ENCODE measurements at regions of chr19 and their contacts with region 1.

Region 1: GRCh38 chr19:15323496-15324227 is 8.7 kb downstream of the BRD4 start:
- DNase-seq: peak; percentile 53 to 77 (median 64)
- ATAC-seq: peak; percentile 52 to 72 (median 64)
- H3K4me3 ChIP-seq: no peak overlapping the region
- H3K27ac ChIP-seq: peak overlapping the region; percentile 21 to 82 (median 58)
- H3K4me1 ChIP-seq: peaks cover 65 to 91% (median 77%) of the 10 kb centered on the region in 3 donors
- H3K27me3 ChIP-seq: no peaks in the 10 kb centered on the region
- CTCF ChIP-seq: no peak

Region 2: DNA sequence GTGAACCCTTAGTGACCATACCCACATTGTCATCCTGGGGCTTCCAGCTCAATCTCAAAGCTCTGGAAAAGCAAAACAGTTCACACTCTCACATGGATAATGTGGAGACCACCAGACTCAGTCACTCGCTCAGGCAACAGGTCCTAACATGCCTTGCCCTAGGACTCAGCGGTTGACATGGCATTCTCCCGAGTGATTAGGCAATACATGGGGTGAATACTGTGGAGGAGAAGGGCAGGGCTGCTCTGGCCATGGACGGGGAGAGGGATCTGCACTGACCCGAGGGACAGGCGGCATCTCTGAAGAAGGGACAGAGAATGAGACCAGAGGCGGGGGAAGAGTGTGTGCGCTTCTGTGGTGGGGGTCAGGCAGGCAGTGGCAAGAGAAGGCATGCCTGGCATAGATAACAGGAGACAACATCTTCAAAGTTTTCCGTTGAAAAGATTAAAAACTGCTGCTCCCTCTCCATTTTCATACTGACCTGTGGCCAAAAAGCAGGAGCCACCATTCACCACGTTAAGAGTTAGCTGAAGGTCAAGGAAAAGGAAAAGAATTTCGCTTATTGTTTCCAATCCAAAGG is 46.9 kb before region 1 on chr19:
- intact Hi-C with region 1: loop called in 1 of 3 experiments (anchors 10 kb)
- DNase-seq: no peak
- ATAC-seq: no peak
- H3K4me3 ChIP-seq: no peak overlapping the region
- H3K27ac ChIP-seq: no peak overlapping the region
- H3K4me1 ChIP-seq: peaks cover 18 to 50% (median 39%) of the 10 kb centered on the region in 3 donors
- H3K27me3 ChIP-seq: no peaks in the 10 kb centered on the region
- CTCF ChIP-seq: no peak

Measured in pancreas (tissue), 10 donors.